ENCODE measurements at regions of chr5 and their contacts with region 1.

Region 1: DNA sequence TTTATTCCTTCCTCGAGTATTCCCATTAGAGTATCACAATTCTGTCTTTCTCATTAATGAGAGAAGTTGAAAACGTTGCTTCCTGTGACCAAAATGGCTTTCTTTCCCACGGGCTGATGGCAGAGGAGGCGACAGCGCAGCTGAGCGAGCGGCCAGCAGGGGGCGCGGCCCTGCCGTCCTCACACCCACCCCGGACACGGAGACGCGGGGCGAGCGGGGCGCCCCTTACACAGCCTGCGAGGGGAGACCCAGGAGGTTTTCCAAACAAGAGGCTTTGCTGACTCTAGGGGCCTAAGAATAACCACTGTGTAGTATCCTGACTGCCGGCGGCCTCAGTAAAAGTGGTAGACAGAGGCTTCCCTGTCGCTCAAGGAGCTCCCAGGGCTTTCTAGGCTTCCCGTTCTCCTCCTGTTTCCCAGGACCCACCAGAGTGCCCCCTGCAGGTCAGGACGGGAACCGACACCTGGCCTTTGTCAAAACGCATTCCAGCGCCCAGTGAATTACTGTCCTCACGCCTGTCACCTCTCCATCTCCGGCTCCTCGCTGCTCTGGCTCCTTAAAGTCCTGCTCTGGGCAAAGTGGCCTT is 27.3 kb upstream of the FGF1 start:
- DNase-seq: peak; percentile 94
- H3K4me3 ChIP-seq: peak overlapping the region; percentile 52
- H3K27ac ChIP-seq: peak overlapping the region; percentile 67
- H3K4me1 ChIP-seq: peaks cover 16% of the 10 kb centered on the region
- H3K27me3 ChIP-seq: no peaks in the 10 kb centered on the region
- CTCF ChIP-seq: peak; percentile 99

Region 2: DNA sequence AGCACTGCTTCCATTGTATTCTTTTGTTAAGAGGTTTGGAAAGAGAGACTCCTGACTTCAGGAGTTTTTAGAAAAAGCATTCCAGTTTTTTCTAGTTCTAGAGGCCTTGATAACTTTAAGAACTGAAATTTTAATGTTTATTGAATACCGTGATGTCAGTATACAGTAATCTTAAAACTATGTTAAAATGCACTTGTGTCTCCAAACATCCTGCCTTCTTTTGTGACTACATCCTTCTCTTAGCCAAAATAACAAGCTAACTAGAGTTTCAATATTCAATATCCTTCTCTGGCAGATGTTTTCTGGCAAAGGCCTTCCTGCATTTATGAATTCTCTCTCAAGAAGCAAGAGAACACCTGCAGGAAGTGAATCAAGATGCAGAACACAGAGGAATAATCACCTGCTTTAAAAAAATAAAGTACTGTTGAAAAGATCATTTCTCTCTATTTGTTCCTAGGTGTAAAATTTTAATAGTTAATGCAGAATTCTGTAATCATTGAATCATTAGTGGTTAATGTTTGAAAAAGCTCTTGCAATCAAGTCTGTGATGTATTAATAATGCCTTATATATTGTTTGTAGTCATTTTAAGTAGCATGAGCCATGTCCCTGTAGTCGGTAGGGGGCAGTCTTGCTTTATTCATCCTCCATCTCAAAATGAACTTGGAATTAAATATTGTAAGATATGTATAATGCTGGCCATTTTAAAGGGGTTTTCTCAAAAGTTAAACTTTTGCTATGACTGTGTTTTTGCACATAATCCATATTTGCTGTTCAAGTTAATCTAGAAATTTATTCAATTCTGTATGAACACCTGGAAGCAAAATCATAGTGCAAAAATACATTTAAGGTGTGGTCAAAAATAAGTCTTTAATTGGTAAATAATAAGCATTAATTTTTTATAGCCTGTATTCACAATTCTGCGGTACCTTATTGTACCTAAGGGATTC is 561.5 kb before region 1 on chr5:
- CTCF ChIA-PET with region 1: interaction called, 11 read pairs
- POLR2A ChIA-PET with region 1: no interaction called
- intact Hi-C with region 1: no loop called
- DNase-seq: peak; percentile 88
- H3K4me3 ChIP-seq: no peak overlapping the region
- H3K27ac ChIP-seq: no peak overlapping the region
- H3K4me1 ChIP-seq: peaks cover 24% of the 10 kb centered on the region
- H3K27me3 ChIP-seq: no peaks in the 10 kb centered on the region
- CTCF ChIP-seq: peak; percentile 95

Region 3: GRCh38 chr5:142699184-142699720 is 14.0 kb before region 1 on chr5:
- CTCF ChIA-PET with region 1: interaction called, 18 read pairs
- POLR2A ChIA-PET with region 1: no interaction called
- intact Hi-C with region 1: no loop called
- DNase-seq: peak; percentile 93
- H3K4me3 ChIP-seq: no peak overlapping the region
- H3K27ac ChIP-seq: no peak overlapping the region
- H3K4me1 ChIP-seq: peaks cover 40% of the 10 kb centered on the region
- H3K27me3 ChIP-seq: no peaks in the 10 kb centered on the region
- CTCF ChIP-seq: peak; percentile 95

Region 4: GRCh38 chr5:142874537-142874936 is 161.3 kb after region 1 on chr5:
- CTCF ChIA-PET with region 1: interaction called, 62 read pairs
- POLR2A ChIA-PET with region 1: no interaction called
- intact Hi-C with region 1: no loop called
- DNase-seq: peak; percentile 35
- H3K4me3 ChIP-seq: no peak overlapping the region
- H3K27ac ChIP-seq: no peak overlapping the region
- H3K4me1 ChIP-seq: peaks cover 81% of the 10 kb centered on the region
- H3K27me3 ChIP-seq: no peaks in the 10 kb centered on the region
- CTCF ChIP-seq: no peak

Region 5: DNA sequence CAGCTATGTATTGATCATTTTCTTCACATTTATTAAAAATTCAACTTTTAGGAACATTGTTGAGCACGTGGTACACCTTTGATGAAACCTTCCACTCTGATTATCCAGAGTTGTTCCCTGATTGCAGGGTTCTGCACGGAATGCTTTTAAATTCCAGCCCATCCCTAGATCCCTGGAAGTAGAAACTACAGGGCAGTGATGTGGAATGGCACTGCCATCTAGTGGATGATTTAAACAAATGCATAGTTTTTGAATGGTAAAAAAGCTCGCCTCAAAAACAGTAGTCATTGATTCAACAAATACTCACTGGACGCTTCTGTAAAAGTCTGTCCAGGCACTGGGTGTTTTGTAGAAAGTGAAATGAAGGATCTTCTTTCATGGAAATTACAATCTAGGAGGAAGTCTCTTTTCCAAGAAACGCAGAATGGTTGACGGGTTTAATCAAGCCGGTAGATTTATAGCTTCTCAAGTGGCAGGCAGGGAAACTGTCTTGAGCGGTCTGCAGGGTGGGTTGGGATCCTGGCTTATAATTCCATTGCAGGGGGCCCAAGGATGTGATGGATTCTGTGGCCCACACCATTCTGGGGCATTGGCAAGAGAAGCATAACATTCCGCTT is 175.4 kb after region 1 on chr5:
- CTCF ChIA-PET with region 1: interaction called, 59 read pairs
- POLR2A ChIA-PET with region 1: no interaction called
- intact Hi-C with region 1: loop called (anchors 2 kb)
- DNase-seq: peak; percentile 68
- H3K4me3 ChIP-seq: no peak overlapping the region
- H3K27ac ChIP-seq: no peak overlapping the region
- H3K4me1 ChIP-seq: peaks cover 3% of the 10 kb centered on the region
- H3K27me3 ChIP-seq: no peaks in the 10 kb centered on the region
- CTCF ChIP-seq: peak; percentile 78

Region 6: DNA sequence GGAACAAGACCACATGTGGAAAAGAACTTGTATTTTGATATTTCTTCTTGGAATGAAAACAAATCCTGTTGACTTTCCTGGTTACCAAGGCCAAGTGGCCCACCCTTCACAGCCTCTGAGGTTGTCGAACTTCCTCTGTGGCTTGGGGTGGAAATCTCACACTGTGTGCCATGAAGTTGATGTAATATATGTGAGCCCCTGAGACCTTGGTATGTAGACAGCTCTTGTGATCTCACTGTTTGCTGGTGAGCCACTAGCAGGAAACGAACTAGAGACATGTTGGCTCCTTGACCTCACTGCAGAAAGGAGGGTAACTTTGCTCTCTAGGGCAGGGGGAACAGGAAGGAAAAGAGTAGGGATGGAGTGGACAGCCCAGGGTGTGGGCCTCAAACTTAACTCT is 216.4 kb after region 1 on chr5:
- CTCF ChIA-PET with region 1: no interaction called
- POLR2A ChIA-PET with region 1: no interaction called
- intact Hi-C with region 1: no loop called
- DNase-seq: no peak
- H3K4me3 ChIP-seq: no peak overlapping the region
- H3K27ac ChIP-seq: no peak overlapping the region
- H3K4me1 ChIP-seq: peaks cover 22% of the 10 kb centered on the region
- H3K27me3 ChIP-seq: no peaks in the 10 kb centered on the region
- CTCF ChIP-seq: no peak